Endothelial cell of umbilical vein (primary cell): ENCODE measurements at regions of chr2 and their contacts with region 1.

Region 1: DNA sequence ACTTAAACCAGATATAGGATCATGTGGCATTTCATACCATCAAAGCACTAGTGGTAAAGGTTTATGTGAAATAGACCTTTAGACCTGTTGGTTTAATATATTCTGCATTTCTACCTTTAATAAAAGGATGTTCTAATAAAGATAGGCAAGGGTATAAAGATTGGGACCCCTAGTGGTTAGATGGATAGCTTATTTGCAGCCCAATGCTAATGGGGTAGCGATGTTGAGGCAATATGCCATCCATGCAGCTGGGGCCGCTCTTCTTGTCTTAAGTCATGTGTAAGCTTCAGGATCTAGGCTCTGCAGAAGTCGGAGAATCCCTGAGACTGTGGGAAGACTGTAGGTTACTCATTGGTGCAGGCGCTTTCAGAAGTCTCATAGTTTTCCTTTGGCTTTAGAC is 114.9 kb downstream of the ICOS start:
- DNase-seq: peak; percentile 14
- H3K4me3 ChIP-seq: no peak overlapping the region
- H3K27ac ChIP-seq: no peak overlapping the region
- H3K4me1 ChIP-seq: no peaks in the 10 kb centered on the region
- H3K27me3 ChIP-seq: peaks cover 15 to 28% of the 10 kb centered on the region in 2 experiments
- CTCF ChIP-seq: peak; percentile 21 to 31
- POLR2A ChIP-seq: no peak

Region 2: DNA sequence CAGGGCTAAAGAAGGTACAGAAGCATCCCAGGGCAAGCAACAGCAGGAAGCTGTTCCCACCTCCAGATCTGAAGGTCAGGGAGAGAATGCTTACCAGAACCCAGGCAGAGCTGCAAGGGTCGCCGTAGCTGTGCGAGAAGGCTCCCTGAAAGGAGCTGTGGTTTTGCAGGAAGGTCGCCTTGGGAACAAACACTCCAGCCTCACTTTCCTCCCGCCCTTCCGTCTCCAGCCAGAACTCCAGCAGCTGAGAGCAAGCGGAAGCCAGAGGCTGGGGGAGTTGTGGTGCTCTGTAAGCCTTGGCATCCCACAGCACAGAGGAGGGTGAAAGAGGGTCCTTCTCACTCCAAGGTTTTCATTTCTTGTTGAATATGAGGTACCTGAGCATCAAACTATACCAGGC is 133.2 kb before region 1 on chr2:
- CTCF ChIA-PET with region 1: no interaction called
- POLR2A ChIA-PET with region 1: no interaction called
- dilution Hi-C with region 1: no loop called
- intact Hi-C with region 1: no loop called
- DNase-seq: no peak
- H3K4me3 ChIP-seq: no peak overlapping the region
- H3K27ac ChIP-seq: no peak overlapping the region
- H3K4me1 ChIP-seq: no peaks in the 10 kb centered on the region
- H3K27me3 ChIP-seq: peaks cover 3 to 6% of the 10 kb centered on the region in 2 experiments
- CTCF ChIP-seq: no peak
- POLR2A ChIP-seq: no peak

Region 3: GRCh38 chr2:203928849-203929248 is 122.6 kb before region 1 on chr2:
- CTCF ChIA-PET with region 1: interaction called, 12 read pairs
- POLR2A ChIA-PET with region 1: no interaction called
- dilution Hi-C with region 1: no loop called
- intact Hi-C with region 1: no loop called
- DNase-seq: peak; percentile 34
- H3K4me3 ChIP-seq: no peak overlapping the region
- H3K27ac ChIP-seq: no peak overlapping the region
- H3K4me1 ChIP-seq: no peaks in the 10 kb centered on the region
- H3K27me3 ChIP-seq: peaks cover 0 to 11% of the 10 kb centered on the region in 2 experiments
- CTCF ChIP-seq: peak in 1 of 2 donors; percentile 27
- POLR2A ChIP-seq: no peak

Region 4: GRCh38 chr2:204039298-204039838 is 12.1 kb before region 1 on chr2:
- CTCF ChIA-PET with region 1: interaction called, 13 read pairs
- POLR2A ChIA-PET with region 1: no interaction called
- dilution Hi-C with region 1: no loop called
- intact Hi-C with region 1: no loop called
- DNase-seq: no peak
- H3K4me3 ChIP-seq: no peak overlapping the region
- H3K27ac ChIP-seq: no peak overlapping the region
- H3K4me1 ChIP-seq: peaks cover under 1% of the 10 kb centered on the region
- H3K27me3 ChIP-seq: peaks cover 14 to 16% of the 10 kb centered on the region in 2 experiments
- CTCF ChIP-seq: no peak
- POLR2A ChIP-seq: no peak